ENCODE measurements at regions of chr19 and their contacts with region 1.

Region 1: GRCh38 chr19:16572332-16573211 is at the start of gene SLC35E1:
- DNase-seq: peak; percentile 94
- ATAC-seq: peak; percentile 92
- H3K4me3 ChIP-seq: peak within 1 kb of the TSS; percentile 75 to 97 (median 88)
- H3K4me3 Mint-ChIP-seq: peak within 1 kb of the TSS; percentile 98
- H3K27ac ChIP-seq: peak within 1 kb of the TSS; percentile 79 to 96
- H3K27ac Mint-ChIP-seq: peak within 1 kb of the TSS; percentile 98
- H3K4me1 ChIP-seq: peaks cover 27 to 39% of the 10 kb centered on the region in 2 donors
- H3K4me1 Mint-ChIP-seq: peaks cover 46% of the 10 kb centered on the region
- H3K27me3 ChIP-seq: no peaks in the 10 kb centered on the region
- H3K27me3 Mint-ChIP-seq: no peaks in the 10 kb centered on the region
- CTCF ChIP-seq: no peak
- total RNA-seq, gene SLC35E1: 46.8 and 51.6 TPM in 2 replicates

Region 2: GRCh38 chr19:16351133-16351809 is 221.3 kb before region 1 on chr19:
- CTCF ChIA-PET with region 1: no interaction called
- POLR2A ChIA-PET with region 1: interaction called, 12 read pairs
- intact Hi-C with region 1: no loop called
- DNase-seq: peak; percentile 40
- ATAC-seq: no peak
- H3K4me3 ChIP-seq: peak overlapping the region in 2 of 5 experiments; percentile 0 to 11
- H3K4me3 Mint-ChIP-seq: peak overlapping the region; percentile 55
- H3K27ac ChIP-seq: peak overlapping the region in 1 of 2 donors; percentile 36
- H3K27ac Mint-ChIP-seq: peak overlapping the region; percentile 53
- H3K4me1 ChIP-seq: peaks cover 24 to 33% of the 10 kb centered on the region in 2 donors
- H3K4me1 Mint-ChIP-seq: peaks cover 37% of the 10 kb centered on the region
- H3K27me3 ChIP-seq: no peaks in the 10 kb centered on the region
- H3K27me3 Mint-ChIP-seq: no peaks in the 10 kb centered on the region
- CTCF ChIP-seq: no peak

Region 3: DNA sequence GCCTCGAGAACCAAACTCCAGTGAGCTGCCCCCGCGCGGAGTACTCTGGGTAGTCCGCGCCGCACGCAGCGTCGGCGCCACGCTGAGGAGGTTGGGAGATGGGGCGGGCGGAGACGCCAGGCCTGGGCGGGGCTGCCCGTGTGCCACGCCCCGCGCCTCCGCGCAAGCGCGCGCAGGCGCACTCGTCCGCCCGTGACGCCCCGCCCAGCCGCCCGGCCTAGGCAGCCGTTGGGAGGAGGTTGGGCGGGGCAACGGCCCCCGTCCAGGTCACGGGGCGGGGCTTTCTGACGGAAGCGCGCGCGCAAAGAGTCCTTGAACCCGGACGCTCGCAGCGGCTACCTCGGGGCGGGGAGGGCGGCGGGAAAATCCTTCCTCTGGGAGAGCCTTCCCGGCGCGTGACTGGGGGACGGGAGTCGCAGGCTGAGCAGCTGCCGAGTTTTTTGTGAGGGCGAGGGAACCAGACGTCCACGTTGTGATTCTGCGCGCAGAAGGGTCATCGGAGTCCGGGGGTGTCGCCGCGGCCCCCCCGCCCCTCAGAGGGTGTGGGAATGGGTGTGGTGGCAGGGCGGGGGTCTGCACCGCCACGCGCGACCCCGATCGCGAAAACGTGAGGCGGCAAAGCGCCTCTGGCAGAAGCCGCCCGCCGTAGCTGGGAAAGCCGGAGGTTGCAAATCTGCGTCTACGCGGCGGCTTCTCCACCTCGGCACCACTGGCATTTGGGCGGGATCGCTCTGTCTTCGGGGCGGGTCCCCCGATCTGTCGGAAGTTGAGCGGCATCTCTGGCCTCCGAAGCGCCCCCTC is 55.8 kb after region 1 on chr19 and contains the start of gene MED26:
- CTCF ChIA-PET with region 1: no interaction called
- POLR2A ChIA-PET with region 1: interaction called, 6 read pairs
- intact Hi-C with region 1: loop called (anchors 1 kb)
- DNase-seq: peak; percentile 97
- ATAC-seq: peak; percentile 93
- H3K4me3 ChIP-seq: peak within 1 kb of the TSS; percentile 18 to 93 (median 87)
- H3K4me3 Mint-ChIP-seq: peak within 1 kb of the TSS; percentile 97
- H3K27ac ChIP-seq: peak within 1 kb of the TSS; percentile 87 to 93
- H3K27ac Mint-ChIP-seq: peak within 1 kb of the TSS; percentile 98
- H3K4me1 ChIP-seq: peaks cover 23 to 27% of the 10 kb centered on the region in 2 donors
- H3K4me1 Mint-ChIP-seq: peaks cover 53% of the 10 kb centered on the region
- H3K27me3 ChIP-seq: no peaks in the 10 kb centered on the region
- H3K27me3 Mint-ChIP-seq: no peaks in the 10 kb centered on the region
- CTCF ChIP-seq: no peak
- total RNA-seq, gene MED26: 32.2 and 33.6 TPM in 2 replicates